HepG2 (cell line): ENCODE measurements at regions of chr15 and their contacts with region 1.

Region 1: DNA sequence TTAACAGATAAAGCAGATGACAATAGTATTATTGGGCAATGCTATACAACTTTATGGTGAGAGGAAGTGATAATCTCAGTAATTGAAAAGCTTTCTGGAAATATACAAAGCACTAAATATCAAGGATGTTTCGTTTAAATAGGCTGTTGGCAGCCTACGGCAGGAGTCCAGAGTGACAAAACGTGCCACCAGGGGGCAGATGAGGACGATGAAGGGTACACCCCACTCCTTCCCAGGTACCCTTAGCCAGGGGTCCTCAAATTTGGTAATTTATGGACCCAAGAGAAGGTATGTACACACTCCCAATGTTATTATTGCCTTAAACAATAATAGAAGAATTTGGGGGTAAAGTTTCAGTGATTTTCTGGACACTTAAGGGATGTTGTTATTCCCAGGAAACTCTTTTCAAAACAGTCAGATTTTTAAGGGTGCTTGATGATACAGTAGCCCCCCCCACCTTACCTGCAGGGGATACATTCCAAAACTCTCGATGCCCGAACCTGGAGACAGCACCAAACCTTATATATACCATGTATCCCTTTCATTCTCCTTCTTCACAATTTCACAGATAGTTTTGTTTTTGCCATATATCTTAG is 1.4 kb upstream of the MAGEL2 start:
- DNase-seq: peak; percentile 16
- ATAC-seq: peak; percentile 82
- H3K4me3 ChIP-seq: no peak overlapping the region
- H3K27ac ChIP-seq: no peak overlapping the region
- H3K4me1 ChIP-seq: no peaks in the 10 kb centered on the region
- H3K27me3 ChIP-seq: peaks cover 2 to 18% of the 10 kb centered on the region in 2 experiments; a peak in 2 of 5 replicates
- CTCF ChIP-seq: peak; percentile 75
- EP300 ChIP-seq: no peak
- POLR2A ChIP-seq: no peak
- RAD21 ChIP-seq: 0 out of 2 replicates have a peak, but pooled peaks have one; percentile 41

Region 2: GRCh38 chr15:23532019-23532418 is 117.0 kb before region 1 on chr15:
- CTCF ChIA-PET with region 1: no interaction called
- POLR2A ChIA-PET with region 1: no interaction called
- in situ Hi-C with region 1: no loop called
- intact Hi-C with region 1: no loop called
- DNase-seq: no peak
- ATAC-seq: no peak
- H3K4me3 ChIP-seq: no peak overlapping the region
- H3K27ac ChIP-seq: no peak overlapping the region
- H3K4me1 ChIP-seq: no peaks in the 10 kb centered on the region
- H3K27me3 ChIP-seq: no peaks in the 10 kb centered on the region
- CTCF ChIP-seq: no peak
- EP300 ChIP-seq: no peak
- POLR2A ChIP-seq: no peak
- RAD21 ChIP-seq: no peak

Region 3: DNA sequence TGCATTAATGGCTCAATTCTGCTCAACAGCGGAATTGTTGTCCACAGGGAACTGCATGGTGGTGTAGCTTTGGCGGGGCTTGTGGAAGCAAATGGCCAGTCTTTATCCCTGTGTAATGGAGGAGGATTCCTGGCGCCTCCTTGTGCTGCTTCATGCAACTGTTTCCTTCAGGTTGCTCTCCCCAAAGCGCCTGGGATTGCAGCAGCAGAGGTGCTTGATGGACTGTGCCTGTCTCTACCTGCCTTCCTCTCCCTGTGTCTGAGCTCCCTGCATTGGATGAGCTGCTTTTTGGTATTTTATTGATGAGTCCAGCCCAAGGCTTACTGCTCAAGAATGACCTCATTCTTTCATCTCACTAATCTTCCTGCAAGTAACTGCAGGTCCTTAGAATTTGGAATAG is 111.0 kb after region 1 on chr15:
- CTCF ChIA-PET with region 1: interaction called, 7 read pairs
- POLR2A ChIA-PET with region 1: no interaction called
- in situ Hi-C with region 1: no loop called
- intact Hi-C with region 1: loop called (anchors 2 kb)
- DNase-seq: no peak
- ATAC-seq: peak; percentile 48; the same call in 2 of the 3 replicates
- H3K4me3 ChIP-seq: no peak overlapping the region
- H3K27ac ChIP-seq: no peak overlapping the region
- H3K4me1 ChIP-seq: no peaks in the 10 kb centered on the region
- H3K27me3 ChIP-seq: no peaks in the 10 kb centered on the region; a peak in 1 of 5 replicates
- CTCF ChIP-seq: peak; percentile 40
- EP300 ChIP-seq: no peak
- POLR2A ChIP-seq: no peak
- RAD21 ChIP-seq: no peak

Region 4: GRCh38 chr15:23866832-23867231 is 217.8 kb after region 1 on chr15:
- CTCF ChIA-PET with region 1: interaction called, 8 read pairs
- POLR2A ChIA-PET with region 1: no interaction called
- in situ Hi-C with region 1: loop called (anchors 5 kb)
- intact Hi-C with region 1: no loop called
- DNase-seq: peak; percentile 30
- ATAC-seq: no peak; the same call in 2 of the 3 replicates
- H3K4me3 ChIP-seq: no peak overlapping the region
- H3K27ac ChIP-seq: no peak overlapping the region
- H3K4me1 ChIP-seq: no peaks in the 10 kb centered on the region
- H3K27me3 ChIP-seq: no peaks in the 10 kb centered on the region
- CTCF ChIP-seq: peak; percentile 60
- EP300 ChIP-seq: no peak
- POLR2A ChIP-seq: no peak
- RAD21 ChIP-seq: no peak